GM12878 (cell line): ENCODE measurements at regions of chr10 and their contacts with region 1.

Region 1: DNA sequence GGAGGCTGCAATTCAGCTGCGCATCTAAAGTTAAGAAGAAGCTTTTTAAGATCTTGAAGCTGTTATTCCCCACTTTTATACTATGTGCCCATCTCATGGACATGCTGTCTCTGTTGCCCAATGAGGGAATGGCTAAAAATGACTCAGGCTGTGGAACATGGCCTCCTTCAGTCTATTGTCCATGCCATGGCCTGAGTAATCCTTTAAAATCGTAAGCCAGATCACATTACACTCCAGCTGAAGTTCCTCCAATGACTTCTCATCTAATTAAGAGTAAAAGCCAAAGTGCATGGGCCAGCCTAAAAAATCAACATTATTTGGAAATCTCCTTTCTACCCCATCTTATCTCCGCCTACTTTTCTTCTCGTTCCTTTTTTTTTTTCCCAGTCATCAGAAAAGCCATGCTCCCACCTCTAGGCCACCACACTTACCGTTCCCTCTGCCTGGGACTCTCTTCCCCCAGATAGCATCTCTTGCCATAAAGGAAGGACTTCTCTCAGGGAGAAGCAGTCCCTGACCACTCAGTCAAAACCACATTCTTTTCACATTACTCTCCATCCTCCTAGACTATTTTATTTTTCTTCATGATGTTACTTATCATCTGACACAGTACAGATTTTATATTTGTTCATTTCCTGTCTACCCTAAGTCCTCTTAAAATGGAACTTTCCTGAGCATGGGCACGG is 337.4 kb downstream of the PRPF18 start:
- DNase-seq: no peak
- ATAC-seq: no peak
- H3K4me3 ChIP-seq: no peak overlapping the region
- H3K27ac ChIP-seq: no peak overlapping the region
- H3K4me1 ChIP-seq: peaks cover 22% of the 10 kb centered on the region
- H3K27me3 ChIP-seq: no peaks in the 10 kb centered on the region
- CTCF ChIP-seq: no peak
- EP300 ChIP-seq: no peak
- POLR2A ChIP-seq: no peak
- RAD21 ChIP-seq: no peak

Region 2: DNA sequence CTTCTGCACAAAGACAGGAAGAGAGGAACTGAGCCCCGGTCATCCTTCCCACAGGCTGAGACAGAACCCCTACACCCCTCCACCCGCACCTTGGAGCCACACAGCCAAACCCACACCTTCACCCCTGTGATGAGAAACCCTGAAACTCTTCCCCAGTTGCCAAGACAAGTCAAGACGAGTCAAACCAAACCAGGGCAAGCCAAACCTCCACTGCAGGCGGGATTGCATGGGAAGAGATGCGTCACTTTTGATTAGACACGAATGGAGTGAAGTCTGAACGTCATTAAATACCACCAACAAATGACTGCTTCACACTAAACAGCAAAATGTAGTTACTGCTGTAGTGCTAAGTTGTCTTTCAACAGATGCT is 263.6 kb before region 1 on chr10:
- CTCF ChIA-PET with region 1: no interaction called
- POLR2A ChIA-PET with region 1: no interaction called
- RAD21 ChIA-PET with region 1: no interaction called
- SMC1A ChIA-PET with region 1: no interaction called
- in situ Hi-C with region 1: no loop called
- intact Hi-C with region 1: no loop called
- DNase-seq: peak; percentile 7
- ATAC-seq: peak; percentile 39
- H3K4me3 ChIP-seq: no peak overlapping the region
- H3K27ac ChIP-seq: 0 out of 2 replicates have a peak overlapping the region, but pooled peaks have one; percentile 0
- H3K4me1 ChIP-seq: peaks cover 8% of the 10 kb centered on the region
- H3K27me3 ChIP-seq: no peaks in the 10 kb centered on the region
- CTCF ChIP-seq: no peak
- EP300 ChIP-seq: no peak
- POLR2A ChIP-seq: no peak
- RAD21 ChIP-seq: no peak

Region 3: GRCh38 chr10:13942032-13942431 is 17.8 kb after region 1 on chr10:
- CTCF ChIA-PET with region 1: interaction called, 3 read pairs
- POLR2A ChIA-PET with region 1: interaction called, 3 read pairs
- RAD21 ChIA-PET with region 1: interaction called, 4 read pairs
- SMC1A ChIA-PET with region 1: interaction called, 3 read pairs
- in situ Hi-C with region 1: no loop called
- intact Hi-C with region 1: loop called (anchors 2 kb)
- DNase-seq: peak; percentile 82
- ATAC-seq: peak; percentile 97
- H3K4me3 ChIP-seq: no peak overlapping the region
- H3K27ac ChIP-seq: no peak overlapping the region
- H3K4me1 ChIP-seq: peaks cover 2% of the 10 kb centered on the region; the same call in 1 of the 2 replicates
- H3K27me3 ChIP-seq: no peaks in the 10 kb centered on the region
- CTCF ChIP-seq: no peak
- EP300 ChIP-seq: peak in 1 of 2 experiments; percentile 39; a peak in 2 of 4 replicates
- POLR2A ChIP-seq: no peak
- RAD21 ChIP-seq: no peak

Region 4: DNA sequence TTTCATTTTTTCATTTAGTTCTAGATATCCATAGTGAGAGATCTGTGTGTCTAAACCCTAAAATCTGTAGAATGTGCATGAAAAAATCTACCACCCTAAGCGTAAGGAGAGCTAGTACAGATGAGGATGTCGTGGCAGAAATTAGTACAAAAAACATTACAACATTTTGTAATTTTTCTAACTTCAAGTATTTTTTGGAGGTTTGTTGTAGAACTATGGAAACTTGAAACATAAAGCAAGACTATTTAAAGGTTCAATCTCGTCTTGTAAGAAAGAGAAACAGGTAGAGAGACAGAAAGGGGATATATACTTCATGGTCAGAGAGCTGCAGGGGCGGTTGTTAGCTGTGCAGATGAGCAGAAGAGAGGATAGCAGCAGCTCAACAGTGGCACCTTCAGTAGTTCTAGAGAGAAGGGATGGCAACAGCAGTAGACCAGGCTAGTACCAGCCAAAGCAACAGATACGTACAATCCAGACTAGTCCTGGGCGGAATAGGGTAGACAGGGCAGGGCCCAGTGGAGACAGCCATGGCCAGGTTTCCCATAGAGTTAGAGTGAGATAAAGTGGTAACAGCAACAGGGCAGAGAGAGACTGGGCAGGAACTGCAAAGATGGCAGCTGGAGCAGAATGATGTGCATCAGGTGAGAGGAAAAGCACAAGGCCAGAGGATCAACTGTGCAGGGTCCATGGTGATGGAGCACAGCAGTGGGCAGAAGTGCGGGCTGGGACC is 261.3 kb after region 1 on chr10:
- CTCF ChIA-PET with region 1: no interaction called
- POLR2A ChIA-PET with region 1: no interaction called
- RAD21 ChIA-PET with region 1: no interaction called
- SMC1A ChIA-PET with region 1: no interaction called
- in situ Hi-C with region 1: no loop called
- intact Hi-C with region 1: loop called (anchors 10 kb)
- DNase-seq: peak; percentile 86
- ATAC-seq: peak; percentile 94
- H3K4me3 ChIP-seq: 0 out of 2 replicates have a peak overlapping the region, but pooled peaks have one; percentile 63
- H3K27ac ChIP-seq: peak overlapping the region; percentile 75
- H3K4me1 ChIP-seq: peaks cover 10% of the 10 kb centered on the region
- H3K27me3 ChIP-seq: peaks cover 0 to 3% of the 10 kb centered on the region in 2 experiments; a peak in 2 of 4 replicates
- CTCF ChIP-seq: peak in 2 of 3 experiments; percentile 13 to 27; a peak in 3 of 6 replicates
- EP300 ChIP-seq: no peak
- POLR2A ChIP-seq: peak; percentile 99
- RAD21 ChIP-seq: no peak